Mammary epithelial cell (primary cell): ENCODE measurements at regions of chr7 and their contacts with region 1.

Region 1: GRCh38 chr7:56051339-56052191 is at the starts of genes CCT6A and PSPH:
- DNase-seq: peak; percentile 99
- H3K4me3 ChIP-seq: peak within 1 kb of the TSS; percentile 83 to 97 (median 97)
- H3K27ac ChIP-seq: peak within 1 kb of the TSS; percentile 92
- H3K4me1 ChIP-seq: peaks cover 32% of the 10 kb centered on the region
- H3K27me3 ChIP-seq: no peaks in the 10 kb centered on the region
- CTCF ChIP-seq: no peak
- total RNA-seq, gene CCT6A: 126 to 169 TPM
- total RNA-seq, gene PSPH: 54.7 to 191 TPM

Region 2: GRCh38 chr7:55449205-55449991 is 602.2 kb before region 1 on chr7:
- CTCF ChIA-PET with region 1: no interaction called
- dilution Hi-C with region 1: no loop called
- in situ Hi-C with region 1: no loop called
- intact Hi-C with region 1: no loop called
- DNase-seq: no peak
- H3K4me3 ChIP-seq: no peak overlapping the region
- H3K27ac ChIP-seq: no peak overlapping the region
- H3K4me1 ChIP-seq: peaks cover 3% of the 10 kb centered on the region
- H3K27me3 ChIP-seq: no peaks in the 10 kb centered on the region
- CTCF ChIP-seq: no peak

Region 3: GRCh38 chr7:55951637-55952351 is 99.8 kb before region 1 on chr7 and contains the start of gene MRPS17:
- CTCF ChIA-PET with region 1: no interaction called
- dilution Hi-C with region 1: no loop called
- in situ Hi-C with region 1: no loop called
- intact Hi-C with region 1: no loop called
- DNase-seq: peak; percentile 87
- H3K4me3 ChIP-seq: peak within 1 kb of the TSS; percentile 68 to 90 (median 77)
- H3K27ac ChIP-seq: peak within 1 kb of the TSS; percentile 75
- H3K4me1 ChIP-seq: peaks cover 4% of the 10 kb centered on the region
- H3K27me3 ChIP-seq: no peaks in the 10 kb centered on the region
- CTCF ChIP-seq: no peak
- total RNA-seq, gene MRPS17: 21.8 to 33.8 TPM

Region 4: GRCh38 chr7:55964261-55965099 is 87.1 kb before region 1 on chr7 and contains the start of gene NIPSNAP2:
- CTCF ChIA-PET with region 1: no interaction called
- dilution Hi-C with region 1: no loop called
- in situ Hi-C with region 1: no loop called
- intact Hi-C with region 1: loop called (anchors 5 kb)
- DNase-seq: peak; percentile 30
- H3K4me3 ChIP-seq: peak within 1 kb of the TSS; percentile 51 to 64 (median 60)
- H3K27ac ChIP-seq: peak within 1 kb of the TSS; percentile 68
- H3K4me1 ChIP-seq: peaks cover 18% of the 10 kb centered on the region
- H3K27me3 ChIP-seq: no peaks in the 10 kb centered on the region
- CTCF ChIP-seq: peak; percentile 16 to 37
- total RNA-seq, gene NIPSNAP2: 56.5 to 60.7 TPM

Region 5: GRCh38 chr7:56009695-56010094 is 41.9 kb before region 1 on chr7:
- CTCF ChIA-PET with region 1: no interaction called
- dilution Hi-C with region 1: no loop called
- in situ Hi-C with region 1: no loop called
- intact Hi-C with region 1: loop called (anchors 1 kb)
- DNase-seq: peak; percentile 95
- H3K4me3 ChIP-seq: no peak overlapping the region
- H3K27ac ChIP-seq: peak overlapping the region; percentile 86
- H3K4me1 ChIP-seq: peaks cover 24% of the 10 kb centered on the region
- H3K27me3 ChIP-seq: no peaks in the 10 kb centered on the region
- CTCF ChIP-seq: peak in 1 of 2 donors; percentile 20

Region 6: DNA sequence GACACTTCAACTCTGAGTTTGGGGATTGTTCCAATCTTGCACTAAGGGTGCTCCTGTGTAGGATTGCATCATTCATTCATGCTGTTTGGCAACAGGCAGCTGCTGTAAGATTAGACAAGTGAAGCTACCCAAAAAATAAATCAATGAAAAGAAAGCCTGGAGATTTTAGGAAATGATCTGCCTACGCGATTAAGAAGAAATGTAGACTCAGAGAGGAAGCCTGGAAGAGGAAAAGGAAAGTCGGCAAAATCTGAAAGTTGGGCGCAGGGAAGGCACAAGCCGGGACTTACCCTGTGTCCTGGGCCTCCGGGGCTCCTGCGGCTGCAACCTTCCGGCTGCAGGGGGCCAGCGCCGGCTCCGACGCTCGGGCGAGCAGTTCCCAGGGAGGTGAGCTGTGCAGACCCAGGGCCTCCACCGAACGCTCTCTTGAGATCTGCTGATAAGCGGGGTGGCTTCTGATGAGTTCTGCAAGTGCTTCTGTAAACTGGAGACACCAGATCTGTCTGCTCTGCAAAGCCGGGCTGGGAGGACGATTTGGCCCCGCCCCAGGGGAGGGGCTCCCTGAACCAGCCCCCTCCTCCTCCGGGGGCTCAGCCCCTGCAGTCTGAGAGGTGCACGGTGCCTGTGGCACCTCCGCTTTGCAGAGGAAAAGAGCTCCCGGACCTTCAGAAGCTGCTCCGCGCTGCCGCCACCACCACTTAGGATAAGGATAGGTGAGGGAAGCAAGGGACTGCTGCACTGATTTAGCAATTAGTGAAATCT is 17.7 kb before region 1 on chr7:
- CTCF ChIA-PET with region 1: no interaction called
- dilution Hi-C with region 1: no loop called
- in situ Hi-C with region 1: no loop called
- intact Hi-C with region 1: loop called (anchors 1 kb)
- DNase-seq: peak; percentile 68
- H3K4me3 ChIP-seq: peak overlapping the region; percentile 63 to 65 (median 64)
- H3K27ac ChIP-seq: peak overlapping the region; percentile 64
- H3K4me1 ChIP-seq: no peaks in the 10 kb centered on the region
- H3K27me3 ChIP-seq: no peaks in the 10 kb centered on the region
- CTCF ChIP-seq: peak; percentile 9 to 50

Region 7: DNA sequence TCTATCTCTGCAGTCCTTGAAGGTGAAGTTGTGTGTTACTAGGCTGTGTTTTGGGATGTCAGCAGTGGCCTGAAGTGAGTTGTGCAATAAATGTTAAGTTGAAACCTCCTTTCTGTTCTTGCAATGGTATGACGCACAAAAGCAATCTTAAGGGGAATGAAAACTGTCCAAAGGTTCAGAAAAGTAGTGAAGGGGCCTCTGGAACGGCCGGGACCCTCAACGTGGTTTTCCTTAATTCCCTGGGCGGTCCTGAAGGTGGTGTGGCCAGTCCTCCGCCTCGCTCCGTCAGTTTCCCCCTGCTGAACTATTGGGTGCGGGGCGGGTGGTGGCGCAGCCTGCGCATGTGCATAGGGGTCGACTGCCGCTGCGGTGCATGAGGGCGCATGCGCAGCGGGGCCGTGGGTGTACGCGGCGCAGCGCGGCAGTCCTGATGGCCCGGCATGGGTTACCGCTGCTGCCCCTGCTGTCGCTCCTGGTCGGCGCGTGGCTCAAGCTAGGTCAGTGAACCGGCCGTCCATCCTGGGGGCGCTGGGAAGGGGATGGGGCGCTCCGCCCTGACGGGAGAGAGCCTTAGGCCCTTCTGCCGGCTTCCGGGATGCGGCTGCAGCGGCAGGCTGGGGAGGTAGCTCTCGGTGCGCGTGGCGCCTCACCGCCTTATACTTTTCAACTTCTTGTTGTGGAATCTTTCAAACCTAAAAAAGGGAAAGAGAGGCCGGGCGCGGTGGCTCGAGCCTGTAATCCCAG is 12.5 kb after region 1 on chr7 and contains the start of gene SUMF2:
- CTCF ChIA-PET with region 1: no interaction called
- dilution Hi-C with region 1: no loop called
- in situ Hi-C with region 1: no loop called
- intact Hi-C with region 1: loop called (anchors 2 kb)
- DNase-seq: peak; percentile 80
- H3K4me3 ChIP-seq: peak within 1 kb of the TSS; percentile 89 to 99 (median 98)
- H3K27ac ChIP-seq: peak within 1 kb of the TSS; percentile 72
- H3K4me1 ChIP-seq: peaks cover 16% of the 10 kb centered on the region
- H3K27me3 ChIP-seq: no peaks in the 10 kb centered on the region
- CTCF ChIP-seq: peak in 1 of 2 donors; percentile 40
- total RNA-seq, gene SUMF2: 128 to 215 TPM

Region 8: DNA sequence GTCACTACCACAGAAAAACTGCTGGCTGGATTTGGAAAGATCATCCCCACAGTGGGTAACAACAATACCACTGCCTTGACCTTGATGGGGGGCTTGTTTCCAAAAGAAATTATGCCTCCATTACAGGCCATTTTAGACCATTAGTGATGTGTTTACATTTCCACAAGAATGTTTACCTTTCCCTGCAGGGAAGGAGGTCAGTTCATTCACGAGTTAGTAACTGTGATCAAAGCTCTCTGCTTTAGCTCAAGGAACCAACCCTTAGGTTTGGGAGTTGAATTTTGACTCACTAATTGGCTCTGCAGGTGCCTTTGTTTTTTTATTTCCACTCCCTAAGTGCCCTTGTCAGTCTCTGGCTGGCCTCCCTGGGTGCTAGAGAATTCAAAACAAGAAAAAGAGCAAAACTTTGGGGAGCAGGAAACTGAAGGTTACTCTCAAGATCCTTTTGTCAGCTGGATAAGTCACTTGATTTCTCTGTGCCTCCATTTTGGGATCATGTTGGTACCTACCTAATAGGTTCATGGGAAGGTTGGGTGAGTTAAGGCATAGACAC is 105.7 kb after region 1 on chr7:
- CTCF ChIA-PET with region 1: no interaction called
- dilution Hi-C with region 1: no loop called
- in situ Hi-C with region 1: no loop called
- intact Hi-C with region 1: no loop called
- DNase-seq: no peak
- H3K4me3 ChIP-seq: no peak overlapping the region
- H3K27ac ChIP-seq: no peak overlapping the region
- H3K4me1 ChIP-seq: no peaks in the 10 kb centered on the region
- H3K27me3 ChIP-seq: no peaks in the 10 kb centered on the region
- CTCF ChIP-seq: no peak

Region 9: GRCh38 chr7:56206420-56206819 is 154.9 kb after region 1 on chr7:
- CTCF ChIA-PET with region 1: no interaction called
- dilution Hi-C with region 1: no loop called
- in situ Hi-C with region 1: no loop called
- intact Hi-C with region 1: no loop called
- DNase-seq: no peak
- H3K4me3 ChIP-seq: no peak overlapping the region
- H3K27ac ChIP-seq: no peak overlapping the region
- H3K4me1 ChIP-seq: no peaks in the 10 kb centered on the region
- H3K27me3 ChIP-seq: no peaks in the 10 kb centered on the region
- CTCF ChIP-seq: no peak